Panc1 (cell line): ENCODE measurements at regions of chr7 and their contacts with region 1.

Region 1: GRCh38 chr7:142811154-142811737 is 40.5 kb downstream of the PRSS2 start:
- DNase-seq: no peak
- ATAC-seq: no peak
- H3K4me3 ChIP-seq: no peak overlapping the region
- H3K27ac ChIP-seq: no peak overlapping the region
- H3K4me1 ChIP-seq: no peaks in the 10 kb centered on the region
- H3K27me3 ChIP-seq: peaks cover 9% of the 10 kb centered on the region
- CTCF ChIP-seq: peak; percentile 72

Region 2: DNA sequence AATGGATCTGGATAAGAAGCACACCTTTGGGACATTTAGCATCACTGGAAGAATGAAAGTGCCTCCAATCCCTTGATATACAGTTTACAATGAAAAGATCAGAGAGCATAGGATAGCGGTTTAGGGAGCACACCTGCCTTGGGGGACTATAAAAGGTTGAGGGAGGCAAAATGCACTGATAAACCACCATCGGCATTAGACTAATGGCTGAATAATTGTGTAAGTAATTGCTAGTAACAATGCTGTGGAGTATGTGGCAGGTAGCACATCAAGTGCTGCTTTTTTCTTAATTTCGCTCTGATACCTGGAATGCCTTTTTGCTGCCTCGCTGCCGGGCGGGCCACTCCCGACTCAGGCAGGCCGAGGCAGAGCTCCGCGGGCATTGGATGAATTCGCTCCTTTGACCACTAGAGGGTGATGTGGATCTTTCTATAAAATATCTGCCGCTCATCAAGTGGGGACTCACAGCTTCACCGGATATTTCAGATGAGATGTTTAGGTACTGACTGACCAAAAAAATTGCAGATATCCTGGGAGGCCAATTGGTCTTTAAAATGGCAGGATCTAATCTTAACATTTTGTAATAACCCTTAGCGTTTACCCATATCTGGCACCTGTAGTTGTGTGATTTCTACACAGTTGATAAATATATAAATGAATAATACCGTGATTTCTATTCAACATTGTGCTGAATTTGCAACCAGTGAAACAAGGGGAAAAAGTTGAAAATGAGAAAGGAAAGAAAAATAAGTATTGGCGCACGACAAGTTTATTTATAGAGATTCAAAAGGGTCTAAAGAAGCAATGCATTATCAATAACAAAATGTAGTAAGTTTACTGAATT is 178.7 kb before region 1 on chr7:
- CTCF ChIA-PET with region 1: interaction called, 4 read pairs
- POLR2A ChIA-PET with region 1: no interaction called
- in situ Hi-C with region 1: no loop called
- intact Hi-C with region 1: loop called (anchors 1 kb)
- DNase-seq: peak; percentile 72
- ATAC-seq: peak; percentile 91
- H3K4me3 ChIP-seq: no peak overlapping the region
- H3K27ac ChIP-seq: no peak overlapping the region
- H3K4me1 ChIP-seq: no peaks in the 10 kb centered on the region
- H3K27me3 ChIP-seq: peaks cover 13% of the 10 kb centered on the region
- CTCF ChIP-seq: peak; percentile 83

Region 3: GRCh38 chr7:142681314-142682092 is 129.7 kb before region 1 on chr7:
- CTCF ChIA-PET with region 1: no interaction called
- POLR2A ChIA-PET with region 1: no interaction called
- in situ Hi-C with region 1: no loop called
- intact Hi-C with region 1: no loop called
- DNase-seq: no peak
- ATAC-seq: no peak
- H3K4me3 ChIP-seq: no peak overlapping the region
- H3K27ac ChIP-seq: no peak overlapping the region
- H3K4me1 ChIP-seq: no peaks in the 10 kb centered on the region
- H3K27me3 ChIP-seq: no peaks in the 10 kb centered on the region
- CTCF ChIP-seq: no peak

Region 4: GRCh38 chr7:142795339-142795863 is 15.8 kb before region 1 on chr7:
- CTCF ChIA-PET with region 1: interaction called, 16 read pairs
- POLR2A ChIA-PET with region 1: no interaction called
- in situ Hi-C with region 1: no loop called
- intact Hi-C with region 1: no loop called
- DNase-seq: no peak
- ATAC-seq: no peak
- H3K4me3 ChIP-seq: no peak overlapping the region
- H3K27ac ChIP-seq: no peak overlapping the region
- H3K4me1 ChIP-seq: no peaks in the 10 kb centered on the region
- H3K27me3 ChIP-seq: peaks cover 49% of the 10 kb centered on the region
- CTCF ChIP-seq: no peak